Left colon (tissue), 2 donors: ENCODE measurements at regions of chr19 and their contacts with region 1.

Region 1: DNA sequence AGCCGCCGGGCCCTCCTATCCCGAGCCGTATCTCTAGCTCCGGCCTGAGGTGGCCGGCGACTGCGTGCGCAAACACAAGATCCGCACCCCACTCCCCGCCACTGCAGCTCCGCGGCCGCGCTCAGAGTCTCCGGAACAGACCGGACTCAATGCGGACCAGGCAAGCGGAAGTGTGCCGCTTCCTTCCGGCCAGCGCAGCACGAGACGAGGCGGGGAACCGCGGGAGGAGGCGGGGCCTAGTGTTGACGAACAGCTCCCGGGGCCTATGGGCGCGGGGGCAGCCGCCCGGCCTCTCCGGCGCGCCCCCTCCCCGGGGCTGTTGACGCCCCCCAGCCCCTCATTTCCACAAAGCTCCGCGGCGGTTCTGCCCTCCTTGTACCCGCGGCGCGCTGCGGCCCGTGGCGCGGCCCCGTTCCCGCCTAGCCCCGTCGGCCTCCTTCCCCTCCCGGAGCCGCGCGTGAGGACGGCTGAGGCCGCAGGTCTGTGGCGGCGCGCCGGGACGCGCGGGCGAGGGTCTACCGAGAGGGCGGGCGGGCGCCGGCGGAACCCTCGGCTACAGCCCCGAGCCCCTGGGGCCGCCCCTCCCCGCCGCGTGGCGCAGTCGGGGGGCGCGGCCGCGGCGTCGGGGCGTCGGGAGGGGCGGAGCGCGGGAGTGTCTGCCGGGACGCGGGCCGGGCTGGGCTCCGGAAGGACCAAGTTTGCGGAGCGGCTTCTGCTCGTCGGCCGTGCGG is at the start of gene DPY19L3:
- DNase-seq: peak; percentile 95 to 98
- ATAC-seq: peak; percentile 98
- total RNA-seq, gene DPY19L3: 17.7 to 17.9 TPM

Region 2: DNA sequence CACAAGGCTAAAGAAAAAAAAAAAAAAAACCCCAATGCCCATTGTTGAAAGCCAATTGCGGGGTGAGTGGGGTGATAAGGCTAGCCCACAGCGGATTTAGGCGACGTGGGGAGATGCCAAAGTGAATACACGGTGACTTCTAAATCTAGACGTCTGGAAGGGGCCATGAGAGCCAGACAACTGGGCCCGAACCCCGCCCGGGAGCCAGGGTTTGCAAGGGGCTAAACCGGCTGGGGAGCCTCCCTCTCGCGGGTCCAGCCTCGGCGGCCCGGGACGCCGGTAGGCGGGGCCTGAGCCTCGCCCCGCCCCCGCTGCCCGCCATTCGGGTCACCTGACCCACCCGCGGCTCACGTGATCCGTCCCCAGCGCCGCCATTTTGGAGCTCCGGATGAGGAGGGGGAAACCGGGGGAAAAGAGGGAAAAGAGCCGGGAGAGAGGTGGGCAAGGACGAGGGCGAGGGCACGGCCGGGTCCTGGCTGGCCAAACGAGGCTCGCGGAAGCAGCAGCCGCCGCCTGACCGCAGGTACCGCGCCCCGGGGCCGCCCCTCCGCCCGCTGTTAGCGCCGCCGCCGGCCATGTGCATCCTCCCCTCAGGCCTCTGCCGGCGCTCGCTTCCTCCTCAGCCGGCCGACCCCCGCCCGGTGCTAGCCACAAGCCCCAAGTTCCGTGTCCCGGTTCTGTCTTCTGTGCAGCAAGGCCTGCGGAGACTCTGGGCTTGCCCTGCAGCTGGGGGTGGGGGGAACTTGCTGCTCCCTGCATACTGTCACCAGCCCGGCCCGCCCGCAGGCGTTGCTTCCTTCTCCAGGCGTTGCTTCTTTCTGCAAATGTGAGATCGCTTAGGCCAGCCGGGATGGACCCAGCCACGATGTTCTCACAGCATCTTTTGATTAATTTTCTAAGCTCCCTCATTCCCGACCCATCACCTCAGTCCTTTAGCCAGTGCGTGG is 60.1 kb before region 1 on chr19 and contains the start of gene ZNF507:
- intact Hi-C with region 1: loop called in 1 of 2 experiments (anchors 10 kb)
- DNase-seq: peak; percentile 75 to 88
- ATAC-seq: peak; percentile 96
- total RNA-seq, gene ZNF507: 18.4 to 20.0 TPM